ENCODE measurements at regions of chr10 and their contacts with region 1.

Region 1: GRCh38 chr10:88386821-88387773 is 196.0 kb downstream of the RNLS start:
- DNase-seq: peak in 1 of 3 donors; percentile 15
- ATAC-seq: peak; percentile 93 to 96
- H3K4me3 ChIP-seq: peak overlapping the region; percentile 51
- H3K27ac ChIP-seq: peak overlapping the region; percentile 72
- H3K4me1 ChIP-seq: peaks cover 6% of the 10 kb centered on the region
- H3K27me3 ChIP-seq: no peaks in the 10 kb centered on the region

Region 2: GRCh38 chr10:87850742-87851205 is 536.3 kb before region 1 on chr10:
- intact Hi-C with region 1: loop called in 1 of 4 experiments (anchors 10 kb)
- DNase-seq: peak; percentile 45 to 67 (median 65)
- ATAC-seq: peak; percentile 93
- H3K4me3 ChIP-seq: no peak overlapping the region
- H3K27ac ChIP-seq: no peak overlapping the region
- H3K4me1 ChIP-seq: no peaks in the 10 kb centered on the region
- H3K27me3 ChIP-seq: no peaks in the 10 kb centered on the region

Region 3: DNA sequence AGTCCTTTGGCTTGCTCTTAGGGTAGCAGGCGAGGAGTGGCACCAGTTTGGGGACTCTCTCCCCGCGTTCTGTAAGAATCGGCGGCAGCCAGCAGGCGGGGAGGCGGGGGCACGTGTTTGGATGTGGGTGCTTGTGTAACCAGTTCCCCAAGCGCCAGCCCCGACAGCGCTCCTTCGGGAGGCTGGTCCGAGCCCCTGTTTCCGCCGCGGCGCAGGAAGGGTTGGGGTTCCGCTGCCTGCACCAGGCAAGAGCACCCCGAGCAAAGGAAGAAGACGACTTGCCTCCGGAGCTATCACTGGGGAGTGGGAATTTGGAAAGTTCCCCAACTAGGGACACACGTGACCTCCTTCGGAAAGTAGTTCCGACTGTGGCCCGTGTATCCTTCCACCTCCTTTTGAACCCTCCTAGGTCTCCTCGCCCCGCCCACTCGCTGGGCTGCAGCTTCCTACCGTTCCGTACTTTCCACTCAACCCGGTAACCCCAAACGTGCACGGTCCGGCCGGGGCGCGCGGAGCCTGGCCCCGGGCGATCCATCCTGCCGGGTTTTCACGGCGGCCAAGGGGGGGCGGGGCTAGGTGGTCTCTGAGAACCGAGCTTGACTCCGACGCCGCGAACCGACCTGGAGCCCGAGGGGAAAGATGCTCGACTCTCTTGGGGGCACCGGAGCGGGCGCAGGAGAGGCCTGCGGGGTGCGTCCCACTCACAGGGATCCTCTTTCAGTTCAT is 525.0 kb before region 1 on chr10:
- intact Hi-C with region 1: loop called (anchors 5 to 10 kb)
- DNase-seq: peak; percentile 98 to 99 (median 98)
- ATAC-seq: peak; percentile 93 to 95
- H3K4me3 ChIP-seq: peak overlapping the region; percentile 77
- H3K27ac ChIP-seq: peak overlapping the region; percentile 99
- H3K4me1 ChIP-seq: no peaks in the 10 kb centered on the region
- H3K27me3 ChIP-seq: no peaks in the 10 kb centered on the region

Region 4: DNA sequence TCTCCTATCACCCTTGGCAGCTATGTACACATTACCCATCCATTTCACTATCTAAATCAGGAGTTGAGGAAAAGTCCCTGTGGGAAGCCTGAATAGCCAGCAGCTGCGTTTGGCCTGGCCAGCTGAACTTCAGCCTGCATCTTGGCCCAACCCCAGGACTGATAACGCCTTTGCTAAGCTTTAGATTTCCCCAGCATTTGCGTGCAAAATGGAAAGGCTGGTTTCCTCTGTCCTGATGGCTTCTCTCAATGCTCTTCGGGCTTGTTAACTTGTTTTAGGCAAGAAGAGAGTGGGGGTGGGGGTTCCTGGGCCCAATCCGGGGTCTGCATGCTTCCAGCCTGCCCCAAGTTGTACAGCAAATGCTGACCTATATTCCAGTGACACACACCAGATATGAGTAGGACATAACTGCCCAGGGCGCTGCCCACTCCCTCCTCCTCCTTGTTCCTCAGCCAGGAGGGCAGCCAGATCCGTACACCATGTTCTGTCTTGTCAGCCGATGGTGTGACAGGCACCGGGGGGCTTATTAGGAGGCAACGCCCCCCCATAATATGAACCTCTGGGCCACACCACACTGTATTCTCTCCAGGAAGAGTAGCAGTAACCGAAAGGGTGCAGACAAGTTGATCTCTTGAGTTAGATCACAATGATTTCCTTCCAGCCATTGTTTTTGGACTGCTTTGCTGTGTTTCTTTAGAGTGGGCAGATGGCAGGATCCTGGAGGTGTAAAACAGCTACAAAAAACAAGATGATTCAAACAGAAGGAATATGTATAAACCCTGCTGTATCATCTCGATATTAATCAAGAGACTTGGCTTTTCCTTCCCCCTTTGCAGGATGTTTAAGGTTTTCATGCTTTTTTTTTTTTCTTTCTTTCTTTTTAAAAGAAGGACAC is 143.0 kb before region 1 on chr10:
- intact Hi-C with region 1: loop called in 2 of 4 experiments (anchors 10 kb)
- DNase-seq: peak; percentile 88 to 93 (median 91)
- ATAC-seq: peak; percentile 94 to 96
- H3K4me3 ChIP-seq: peak overlapping the region; percentile 21
- H3K27ac ChIP-seq: peak overlapping the region; percentile 94
- H3K4me1 ChIP-seq: peaks cover 7% of the 10 kb centered on the region
- H3K27me3 ChIP-seq: no peaks in the 10 kb centered on the region

Region 5: DNA sequence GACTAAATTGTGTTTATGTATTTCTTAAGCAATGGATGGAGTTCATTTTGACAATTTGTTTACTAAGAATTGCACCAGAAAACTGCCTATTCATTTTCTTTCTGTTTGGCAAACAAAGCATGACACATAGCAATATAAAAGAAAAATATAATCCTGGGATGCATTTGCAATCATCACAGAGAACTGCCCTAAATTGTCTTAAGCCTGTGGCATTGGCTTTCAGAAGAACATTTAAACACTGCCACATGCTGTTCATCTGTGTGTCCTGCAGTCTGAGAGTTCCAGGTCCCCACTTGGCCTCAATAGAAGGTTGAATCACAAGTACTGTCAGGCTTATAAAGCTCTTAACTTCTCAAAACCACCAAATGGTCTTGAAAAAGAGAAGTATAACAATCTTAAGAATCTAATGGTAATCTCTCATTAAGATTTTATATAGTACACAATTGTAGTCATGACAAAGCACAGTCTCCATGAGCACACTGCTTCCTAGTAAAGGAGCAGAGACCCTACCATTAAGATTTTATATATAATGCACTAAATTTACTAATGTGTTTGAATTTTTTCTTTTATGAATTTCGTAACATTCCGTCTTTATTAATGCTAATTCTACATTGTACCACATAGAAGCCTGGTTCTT is 166.1 kb after region 1 on chr10:
- intact Hi-C with region 1: loop called in 2 of 4 experiments (anchors 10 kb)
- DNase-seq: peak in 2 of 3 donors; percentile 18 to 40
- ATAC-seq: peak; percentile 89 to 92
- H3K4me3 ChIP-seq: no peak overlapping the region
- H3K27ac ChIP-seq: no peak overlapping the region
- H3K4me1 ChIP-seq: peaks cover 5% of the 10 kb centered on the region
- H3K27me3 ChIP-seq: no peaks in the 10 kb centered on the region